ENCODE measurements at regions of chr11 and their contacts with region 1.

Region 1: DNA sequence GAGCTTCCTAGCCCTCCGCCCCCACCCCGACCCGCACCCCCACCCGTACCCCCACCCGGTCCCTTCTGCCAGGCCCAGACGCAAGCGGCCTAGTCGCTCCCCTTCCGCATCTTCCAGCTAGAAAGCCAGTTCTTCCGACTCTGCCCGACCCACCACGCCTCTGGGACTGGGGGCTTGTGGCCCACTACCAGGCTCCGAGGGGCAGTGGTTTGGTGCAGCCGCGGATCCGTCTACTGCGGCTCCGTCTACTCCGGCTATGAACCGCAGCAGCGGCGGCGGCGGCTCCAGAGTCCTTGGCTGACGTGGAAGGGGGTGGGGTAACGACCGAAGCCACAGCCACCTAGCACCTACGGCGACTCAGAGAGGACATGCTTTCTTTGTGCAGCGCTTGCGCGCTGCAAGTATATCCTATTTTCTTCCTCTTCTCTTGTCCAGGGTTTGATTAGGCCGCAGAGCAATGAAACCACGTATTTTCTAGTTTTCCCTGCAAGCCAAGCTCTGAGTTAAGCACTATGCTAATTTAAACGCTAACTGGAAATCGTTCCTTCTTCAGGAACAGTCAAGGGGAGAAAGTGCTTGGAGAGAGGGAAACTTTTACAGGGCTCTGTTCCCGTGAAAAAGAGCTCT is at the start of gene COPB1:
- DNase-seq: peak; percentile 84 to 96 (median 90)
- ATAC-seq: peak; percentile 94
- H3K4me3 ChIP-seq: peak within 1 kb of the TSS; percentile 85
- H3K4me3 Mint-ChIP-seq: peak within 1 kb of the TSS; percentile 97
- H3K27ac ChIP-seq: peak within 1 kb of the TSS; percentile 67 to 84
- H3K27ac Mint-ChIP-seq: peak within 1 kb of the TSS; percentile 92
- H3K4me1 ChIP-seq: peaks cover 6% of the 10 kb centered on the region
- H3K4me1 Mint-ChIP-seq: peaks cover 53% of the 10 kb centered on the region
- H3K27me3 ChIP-seq: no peaks in the 10 kb centered on the region
- H3K27me3 Mint-ChIP-seq: no peaks in the 10 kb centered on the region
- CTCF ChIP-seq: no peak
- total RNA-seq, gene COPB1: 93.1 to 95.9 TPM

Region 2: DNA sequence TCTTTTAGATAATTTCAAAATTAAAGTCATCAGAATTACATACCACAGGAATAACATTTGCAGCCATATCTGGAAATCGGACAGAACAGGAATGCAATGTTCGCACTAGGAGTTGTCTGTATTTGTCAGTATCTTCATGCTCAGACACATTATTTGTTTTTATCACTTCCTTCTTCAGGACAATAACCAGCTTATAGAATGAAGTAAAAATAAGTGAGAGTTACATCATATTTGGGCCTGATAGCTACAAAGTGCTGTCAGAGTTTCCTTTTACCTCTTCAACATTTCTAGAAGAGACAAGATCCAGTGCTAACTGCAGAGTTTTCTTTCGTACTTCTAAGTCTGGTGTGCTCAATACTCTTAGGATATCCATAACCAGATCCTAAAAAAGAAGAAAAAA is 19.0 kb before region 1 on chr11:
- CTCF ChIA-PET with region 1: no interaction called
- POLR2A ChIA-PET with region 1: interaction called, 10 read pairs
- intact Hi-C with region 1: no loop called
- DNase-seq: no peak
- ATAC-seq: no peak
- H3K4me3 ChIP-seq: no peak overlapping the region
- H3K4me3 Mint-ChIP-seq: no peak overlapping the region
- H3K27ac ChIP-seq: no peak overlapping the region
- H3K27ac Mint-ChIP-seq: no peak overlapping the region
- H3K4me1 ChIP-seq: no peaks in the 10 kb centered on the region
- H3K4me1 Mint-ChIP-seq: peaks cover 15% of the 10 kb centered on the region
- H3K27me3 ChIP-seq: no peaks in the 10 kb centered on the region
- H3K27me3 Mint-ChIP-seq: no peaks in the 10 kb centered on the region
- CTCF ChIP-seq: no peak

Region 3: DNA sequence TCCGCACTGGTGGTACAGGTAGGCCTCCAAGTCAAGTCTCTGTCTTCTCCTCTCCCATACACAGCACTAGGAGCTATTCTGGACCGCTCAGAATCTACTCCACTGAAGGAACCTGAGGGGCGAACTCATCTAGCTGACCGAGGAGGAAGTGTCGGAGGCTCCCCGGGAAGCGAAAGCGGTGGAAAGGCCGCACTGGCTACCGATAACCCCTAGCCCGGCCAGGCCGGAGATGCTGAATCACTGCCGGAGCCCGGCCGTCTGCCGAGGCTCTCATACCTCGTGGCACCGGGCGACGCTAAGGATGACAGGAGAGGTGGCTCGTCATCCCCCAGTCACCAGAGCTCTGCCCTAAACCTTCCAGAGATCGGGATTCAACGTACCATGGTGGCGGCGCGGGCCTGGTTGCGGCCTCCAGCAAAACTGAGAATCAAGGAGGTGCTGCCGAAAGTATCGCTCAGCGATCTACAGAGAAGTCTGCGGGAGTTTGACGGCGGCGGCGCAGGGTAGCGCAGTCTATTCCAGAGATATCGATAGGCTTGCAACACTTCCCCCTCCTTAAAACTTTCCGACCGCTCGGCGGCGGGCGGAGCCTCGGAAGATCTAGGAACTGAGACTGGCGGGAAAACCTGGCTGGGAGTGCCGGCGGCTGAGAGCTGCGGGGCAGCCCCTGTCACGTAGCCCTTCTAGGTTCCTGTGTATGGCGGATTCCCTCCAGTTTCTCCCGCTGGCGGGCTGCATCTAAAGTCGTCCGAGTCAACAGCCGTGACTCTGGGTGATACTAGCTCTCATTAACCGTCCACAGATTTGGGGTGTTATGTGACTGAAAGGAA is 20.5 kb after region 1 on chr11 and contains the start of gene PSMA1:
- CTCF ChIA-PET with region 1: interaction called, 4 read pairs
- POLR2A ChIA-PET with region 1: interaction called, 26 read pairs
- intact Hi-C with region 1: loop called (anchors 1 kb)
- DNase-seq: peak; percentile 79 to 95 (median 87)
- ATAC-seq: peak; percentile 90
- H3K4me3 ChIP-seq: peak within 1 kb of the TSS; percentile 74
- H3K4me3 Mint-ChIP-seq: peak within 1 kb of the TSS; percentile 96
- H3K27ac ChIP-seq: peak within 1 kb of the TSS; percentile 81 to 83
- H3K27ac Mint-ChIP-seq: peak within 1 kb of the TSS; percentile 94
- H3K4me1 ChIP-seq: peaks cover 14% of the 10 kb centered on the region
- H3K4me1 Mint-ChIP-seq: peaks cover 37% of the 10 kb centered on the region
- H3K27me3 ChIP-seq: no peaks in the 10 kb centered on the region
- H3K27me3 Mint-ChIP-seq: no peaks in the 10 kb centered on the region
- CTCF ChIP-seq: peak; percentile 36
- total RNA-seq, gene PSMA1: 170 to 175 TPM

Region 4: DNA sequence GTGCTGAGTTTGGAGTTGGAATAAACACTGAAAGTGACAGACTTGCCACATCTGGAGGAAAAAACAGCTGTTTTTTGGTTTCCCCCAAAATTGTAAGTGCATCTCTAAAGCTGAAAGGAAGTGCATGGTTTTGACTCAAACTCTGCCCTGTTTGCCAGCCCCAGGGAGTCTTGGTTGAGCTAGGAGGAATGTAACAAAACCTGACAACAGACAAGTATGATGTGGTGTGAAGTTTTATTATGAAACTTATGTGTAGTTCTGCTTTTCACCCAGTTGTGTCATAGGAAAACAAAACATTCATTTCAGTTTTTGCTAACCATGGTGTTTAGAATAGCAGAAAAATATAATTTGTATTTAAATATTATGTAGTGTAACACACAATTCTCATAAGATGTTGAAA is 112.3 kb after region 1 on chr11:
- CTCF ChIA-PET with region 1: no interaction called
- POLR2A ChIA-PET with region 1: no interaction called
- intact Hi-C with region 1: no loop called
- DNase-seq: peak in 2 of 14 experiments; percentile 18 to 20
- ATAC-seq: no peak
- H3K4me3 ChIP-seq: no peak overlapping the region
- H3K4me3 Mint-ChIP-seq: no peak overlapping the region
- H3K27ac ChIP-seq: no peak overlapping the region
- H3K27ac Mint-ChIP-seq: peak overlapping the region; percentile 50
- H3K4me1 ChIP-seq: no peaks in the 10 kb centered on the region
- H3K4me1 Mint-ChIP-seq: peaks cover 42% of the 10 kb centered on the region
- H3K27me3 ChIP-seq: no peaks in the 10 kb centered on the region
- H3K27me3 Mint-ChIP-seq: no peaks in the 10 kb centered on the region
- CTCF ChIP-seq: no peak

Region 5: GRCh38 chr11:14835491-14836105 is 335.9 kb after region 1 on chr11:
- CTCF ChIA-PET with region 1: no interaction called
- POLR2A ChIA-PET with region 1: no interaction called
- intact Hi-C with region 1: no loop called
- DNase-seq: no peak
- ATAC-seq: no peak
- H3K4me3 ChIP-seq: no peak overlapping the region
- H3K4me3 Mint-ChIP-seq: no peak overlapping the region
- H3K27ac ChIP-seq: no peak overlapping the region
- H3K27ac Mint-ChIP-seq: no peak overlapping the region
- H3K4me1 ChIP-seq: no peaks in the 10 kb centered on the region
- H3K4me1 Mint-ChIP-seq: no peaks in the 10 kb centered on the region
- H3K27me3 ChIP-seq: no peaks in the 10 kb centered on the region
- H3K27me3 Mint-ChIP-seq: no peaks in the 10 kb centered on the region
- CTCF ChIP-seq: no peak

Region 6: DNA sequence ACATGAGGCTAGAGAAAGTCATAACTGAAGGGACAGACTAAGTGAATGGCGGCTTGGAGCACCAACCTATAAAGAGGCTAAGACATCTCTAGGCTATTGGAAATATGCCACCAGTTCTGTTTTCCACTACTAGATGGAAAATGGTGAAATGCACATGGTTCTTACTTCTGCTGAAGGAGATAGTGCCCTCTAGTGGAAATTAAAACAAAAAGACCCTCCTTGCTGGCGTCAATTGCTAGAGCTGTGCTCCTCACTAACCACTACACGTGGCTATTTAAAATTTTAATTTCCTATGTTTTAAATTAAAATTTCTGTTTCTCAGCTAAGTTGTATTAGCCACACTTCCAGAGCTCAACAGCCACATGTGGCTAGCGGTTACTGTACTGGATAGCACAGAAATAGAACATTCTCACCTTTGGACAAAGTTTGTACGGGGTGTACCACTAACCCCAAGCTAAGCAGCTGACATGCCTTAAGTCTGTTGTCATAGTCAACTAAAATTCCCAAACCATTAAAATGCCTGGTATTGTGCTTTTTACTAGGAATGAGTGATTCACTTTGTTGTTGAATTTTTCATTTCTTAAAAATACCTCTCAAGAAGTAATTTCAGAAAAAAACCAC is 506.6 kb after region 1 on chr11:
- CTCF ChIA-PET with region 1: no interaction called
- POLR2A ChIA-PET with region 1: no interaction called
- intact Hi-C with region 1: loop called in 1 of 2 experiments (anchors 10 kb)
- DNase-seq: peak in 3 of 14 experiments; percentile 55 to 57 (median 57)
- ATAC-seq: peak; percentile 54
- H3K4me3 ChIP-seq: no peak overlapping the region
- H3K4me3 Mint-ChIP-seq: no peak overlapping the region
- H3K27ac ChIP-seq: no peak overlapping the region
- H3K27ac Mint-ChIP-seq: no peak overlapping the region
- H3K4me1 ChIP-seq: no peaks in the 10 kb centered on the region
- H3K4me1 Mint-ChIP-seq: no peaks in the 10 kb centered on the region
- H3K27me3 ChIP-seq: peaks cover 0 to 19% of the 10 kb centered on the region in 2 experiments
- H3K27me3 Mint-ChIP-seq: peaks cover 64% of the 10 kb centered on the region
- CTCF ChIP-seq: peak; percentile 63

Measured in CD4-positive, alpha-beta T cell (primary cell).